Gastrocnemius medialis (tissue), 4 donors: ENCODE measurements at regions of chr3 and their contacts with region 1.

Region 1: GRCh38 chr3:88113311-88114162 is 36.2 kb upstream of the C3orf38 start:
- DNase-seq: peak; percentile 31 to 35
- ATAC-seq: peak; percentile 86 to 96
- H3K4me3 ChIP-seq: no peak overlapping the region
- H3K27ac ChIP-seq: peak overlapping the region in 1 of 4 donors; percentile 15
- H3K4me1 ChIP-seq: peaks cover 0 to 13% of the 10 kb centered on the region in 2 donors
- H3K27me3 ChIP-seq: no peaks in the 10 kb centered on the region
- CTCF ChIP-seq: peak; percentile 54 to 77 (median 60)
- POLR2A ChIP-seq: no peak

Region 2: DNA sequence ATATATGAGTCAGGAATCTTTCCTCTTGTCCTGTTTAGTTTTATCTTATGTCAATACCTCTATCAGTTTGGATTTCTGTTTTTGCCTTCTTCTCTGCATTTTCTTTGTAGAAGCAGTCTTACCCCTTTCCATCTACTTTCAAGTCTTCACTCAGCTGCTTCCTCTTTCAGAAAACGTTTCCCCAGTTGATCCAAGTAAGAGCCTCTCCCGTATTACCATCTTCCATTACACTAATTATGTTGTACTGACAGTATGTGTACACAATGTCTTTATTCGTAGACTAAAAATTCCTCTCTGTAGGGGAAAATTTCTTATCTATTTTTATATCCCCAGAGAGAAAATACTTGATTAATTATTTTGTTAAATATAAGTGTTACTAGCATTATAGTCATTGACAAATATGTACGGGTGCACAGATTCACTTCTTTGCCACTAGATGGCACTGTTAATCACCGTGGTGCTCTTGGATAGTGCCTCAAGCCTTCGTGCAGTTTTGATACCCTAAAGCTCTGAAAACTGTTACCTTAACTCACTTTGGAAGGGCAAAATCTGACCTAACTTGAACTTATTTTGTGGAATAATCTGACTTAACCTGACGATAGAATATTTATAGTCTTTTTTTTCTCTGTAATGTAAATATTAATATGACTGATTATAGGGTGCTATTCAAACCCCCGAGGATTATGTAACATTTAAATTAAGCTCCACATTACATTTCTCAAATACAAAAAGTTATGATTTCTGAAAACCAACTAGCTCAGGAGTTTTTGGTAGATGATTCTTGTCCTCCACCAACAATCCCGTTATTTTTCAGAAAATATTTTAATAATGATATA is 763.0 kb before region 1 on chr3:
- in situ Hi-C with region 1: loop called in 2 of 4 experiments (anchors 10 to 25 kb)
- intact Hi-C with region 1: loop called (anchors 2 kb)
- DNase-seq: no peak
- ATAC-seq: peak; percentile 56 to 86
- H3K4me3 ChIP-seq: no peak overlapping the region
- H3K27ac ChIP-seq: no peak overlapping the region
- H3K4me1 ChIP-seq: no peaks in the 10 kb centered on the region
- H3K27me3 ChIP-seq: no peaks in the 10 kb centered on the region
- CTCF ChIP-seq: peak; percentile 43 to 88 (median 65)
- POLR2A ChIP-seq: no peak

Region 3: DNA sequence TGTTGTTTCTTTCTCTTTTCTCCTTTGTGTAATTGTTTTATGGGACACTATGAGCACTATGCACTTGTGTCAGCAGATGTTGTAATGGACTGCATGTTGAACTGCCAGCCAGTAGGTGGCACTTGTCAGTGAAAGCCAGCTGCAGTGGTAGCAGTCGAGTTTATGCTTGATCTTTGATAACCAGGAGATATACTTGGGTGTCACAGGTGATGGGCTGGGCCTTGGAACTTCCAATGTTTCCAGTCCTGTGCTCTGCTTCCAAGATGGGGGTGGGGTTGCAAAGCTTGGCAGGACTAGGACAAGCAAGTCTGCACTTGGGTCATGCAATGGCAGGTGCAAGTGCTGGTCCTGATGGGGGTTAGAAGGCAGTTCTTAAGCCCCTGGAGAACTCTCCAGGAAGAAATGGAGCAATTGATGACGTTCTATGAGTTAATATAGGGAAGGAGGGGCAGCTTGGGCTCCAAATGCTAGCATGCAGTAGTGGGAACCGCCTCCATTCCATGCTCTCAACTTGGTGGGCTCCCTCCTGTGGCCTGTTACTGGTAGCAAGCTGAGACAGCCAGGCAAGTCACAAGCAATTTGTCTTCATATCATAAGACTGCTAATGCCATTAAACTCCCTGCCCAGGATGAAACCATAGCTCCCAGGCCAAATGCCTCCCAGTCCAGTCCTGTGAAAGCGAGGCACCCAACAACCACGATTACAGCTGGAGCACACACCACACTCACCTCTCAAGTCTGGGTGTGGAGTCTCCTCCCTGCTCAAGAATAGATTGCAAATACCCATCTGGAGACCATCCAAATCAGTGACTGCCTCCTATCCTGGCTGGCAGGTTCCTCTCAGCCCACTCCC is 342.0 kb before region 1 on chr3:
- in situ Hi-C with region 1: loop called in 2 of 4 experiments (anchors 25 kb)
- intact Hi-C with region 1: no loop called
- DNase-seq: no peak
- ATAC-seq: no peak
- H3K4me3 ChIP-seq: no peak overlapping the region
- H3K27ac ChIP-seq: no peak overlapping the region
- H3K4me1 ChIP-seq: no peaks in the 10 kb centered on the region
- H3K27me3 ChIP-seq: no peaks in the 10 kb centered on the region
- CTCF ChIP-seq: peak in 3 of 5 experiments; percentile 24 to 38 (median 34)
- POLR2A ChIP-seq: no peak

Region 4: GRCh38 chr3:87792534-87793336 is 320.8 kb before region 1 on chr3:
- in situ Hi-C with region 1: no loop called
- intact Hi-C with region 1: no loop called
- DNase-seq: no peak
- ATAC-seq: no peak
- H3K4me3 ChIP-seq: peak within 1 kb of the TSS; percentile 40 to 51 (median 47)
- H3K27ac ChIP-seq: peak within 1 kb of the TSS; percentile 48 to 71 (median 52)
- H3K4me1 ChIP-seq: peaks cover 0 to 3% of the 10 kb centered on the region in 2 donors
- H3K27me3 ChIP-seq: peaks cover 0 to 24% (median 13%) of the 10 kb centered on the region in 3 donors
- CTCF ChIP-seq: no peak
- POLR2A ChIP-seq: no peak

Region 5: GRCh38 chr3:87805670-87806069 is 307.9 kb before region 1 on chr3:
- in situ Hi-C with region 1: loop called in 1 of 4 experiments (anchors 25 kb)
- intact Hi-C with region 1: no loop called
- DNase-seq: no peak
- ATAC-seq: no peak
- H3K4me3 ChIP-seq: no peak overlapping the region
- H3K27ac ChIP-seq: no peak overlapping the region
- H3K4me1 ChIP-seq: no peaks in the 10 kb centered on the region
- H3K27me3 ChIP-seq: no peaks in the 10 kb centered on the region
- CTCF ChIP-seq: no peak
- POLR2A ChIP-seq: no peak

Region 6: DNA sequence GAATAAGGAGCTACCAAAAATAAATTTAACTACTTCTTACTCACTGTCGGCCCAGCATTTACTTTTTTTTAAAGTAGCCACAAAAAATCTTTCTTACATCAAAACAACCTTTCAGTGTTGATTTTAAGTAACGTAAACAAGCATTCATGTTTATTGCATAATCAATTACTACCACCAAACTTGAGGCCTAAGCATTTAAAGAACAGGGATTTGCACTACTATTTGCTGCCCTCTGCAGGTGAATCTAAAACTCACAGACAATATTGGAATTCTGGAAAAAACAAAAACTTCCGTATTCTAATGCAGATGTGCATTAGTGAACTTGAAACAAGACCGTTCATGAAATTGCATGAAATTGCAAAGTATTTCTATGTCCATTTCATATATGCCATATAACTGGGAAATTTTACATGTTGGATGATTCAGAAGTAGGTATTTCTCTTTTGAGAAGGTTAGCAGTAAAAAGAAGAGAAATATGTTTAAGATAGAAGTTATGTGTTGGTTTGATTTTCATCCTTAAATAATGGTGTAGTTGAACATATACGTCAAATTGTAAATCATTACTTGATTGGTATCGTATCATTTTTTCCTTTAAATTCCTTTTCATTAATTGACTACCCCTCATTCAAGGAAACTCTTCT is 110.3 kb before region 1 on chr3:
- in situ Hi-C with region 1: no loop called
- intact Hi-C with region 1: loop called (anchors 5 kb)
- DNase-seq: no peak
- ATAC-seq: no peak
- H3K4me3 ChIP-seq: no peak overlapping the region
- H3K27ac ChIP-seq: no peak overlapping the region
- H3K4me1 ChIP-seq: no peaks in the 10 kb centered on the region
- H3K27me3 ChIP-seq: no peaks in the 10 kb centered on the region
- CTCF ChIP-seq: peak; percentile 28 to 60 (median 43)
- POLR2A ChIP-seq: no peak

Region 7: DNA sequence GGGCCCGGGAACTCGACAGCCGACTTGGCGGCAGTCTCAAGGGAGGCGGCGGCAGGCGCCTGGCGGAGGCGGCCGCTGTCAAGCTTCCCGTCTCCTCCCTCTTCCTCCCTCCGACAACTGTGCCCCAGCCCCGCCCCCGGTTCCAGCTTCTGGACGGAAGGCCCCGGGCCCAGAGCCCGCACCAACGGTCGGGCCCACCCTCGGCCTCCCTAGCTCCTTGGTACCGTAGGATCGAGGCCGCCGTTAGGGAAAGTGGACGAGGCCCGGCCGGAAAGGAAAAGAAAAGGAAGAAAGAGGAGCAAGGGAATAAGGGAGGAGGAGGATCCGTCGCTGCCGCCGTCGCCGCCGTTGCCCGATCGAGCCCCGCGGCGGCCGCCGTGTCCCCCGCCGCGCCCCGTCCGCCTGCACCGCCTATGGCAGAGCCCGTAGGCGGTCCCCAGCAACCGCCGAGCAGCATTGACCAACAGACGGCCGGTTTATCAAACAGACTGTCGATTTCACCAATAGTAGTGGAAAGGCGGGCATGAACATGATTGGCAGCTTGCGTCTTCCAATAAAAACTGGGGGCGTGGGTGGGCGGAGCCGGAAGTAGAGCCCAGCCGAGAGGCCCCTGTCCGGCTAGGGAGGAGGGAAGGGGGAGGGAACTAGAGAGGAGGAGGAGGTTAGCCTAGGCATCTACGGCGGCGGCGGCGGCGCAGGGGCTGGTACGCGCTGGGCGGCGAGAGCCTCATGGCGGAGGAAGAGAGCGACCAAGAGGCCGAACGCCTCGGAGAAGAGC is 54.8 kb before region 1 on chr3 and contains the starts of genes CGGBP1 and ZNF654:
- in situ Hi-C with region 1: no loop called
- intact Hi-C with region 1: loop called (anchors 2 kb)
- DNase-seq: peak; percentile 98 to 99
- ATAC-seq: peak; percentile 94 to 96
- H3K4me3 ChIP-seq: peak within 1 kb of the TSS; percentile 81 to 99 (median 96)
- H3K27ac ChIP-seq: peak within 1 kb of the TSS; percentile 94 to 99 (median 98)
- H3K4me1 ChIP-seq: peaks cover 45 to 47% of the 10 kb centered on the region in 2 donors
- H3K27me3 ChIP-seq: no peaks in the 10 kb centered on the region
- CTCF ChIP-seq: peak in 1 of 5 experiments; percentile 29
- POLR2A ChIP-seq: peak; percentile 90 to 94
- total RNA-seq, gene CGGBP1: 25.9 to 47.3 (median 41.7) TPM
- total RNA-seq, gene ZNF654: 7.8 to 12.5 (median 9.8) TPM